HepG2 (cell line): ENCODE measurements at regions of chr3 and their contacts with region 1.

Region 1: DNA sequence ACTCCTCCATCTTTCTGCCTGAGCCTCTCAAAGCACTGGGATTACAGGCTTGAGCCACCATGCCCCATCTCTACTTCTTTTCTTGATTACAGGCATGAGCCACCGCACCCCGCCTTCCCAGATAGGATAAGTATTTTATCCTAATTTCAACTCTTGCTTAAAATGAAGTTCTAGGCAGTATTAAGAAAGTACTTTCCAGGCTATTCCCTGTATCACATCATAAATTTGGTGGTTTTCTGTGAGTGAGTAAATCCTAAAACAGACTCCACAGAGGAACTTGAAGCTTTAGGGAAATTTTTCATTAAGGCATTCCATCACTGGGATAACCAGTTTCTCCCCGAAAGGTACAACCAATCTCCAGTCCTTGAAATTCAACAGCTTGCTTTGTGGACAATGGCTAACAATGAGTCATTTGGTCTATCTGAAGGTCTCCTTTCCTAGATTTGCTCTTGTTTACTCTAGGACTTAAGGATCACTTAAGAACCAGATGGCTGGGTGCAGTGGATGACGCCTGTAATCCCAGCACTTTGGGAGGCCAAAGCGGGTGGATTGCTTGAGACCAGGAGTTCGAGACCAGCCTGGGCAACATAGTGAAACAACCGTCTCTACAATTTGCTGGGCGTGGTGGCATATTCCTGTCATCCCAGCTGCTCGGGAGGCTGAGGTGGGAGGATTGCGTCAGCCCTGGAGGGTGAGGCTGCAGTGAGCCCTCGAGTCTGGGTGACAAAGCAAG is 49.7 kb upstream of the SKIL start:
- DNase-seq: peak; percentile 24
- ATAC-seq: no peak
- H3K4me3 ChIP-seq: no peak overlapping the region
- H3K27ac ChIP-seq: no peak overlapping the region
- H3K4me1 ChIP-seq: peaks cover 21% of the 10 kb centered on the region
- H3K27me3 ChIP-seq: no peaks in the 10 kb centered on the region
- CTCF ChIP-seq: no peak
- EP300 ChIP-seq: no peak
- POLR2A ChIP-seq: no peak
- RAD21 ChIP-seq: no peak

Region 2: DNA sequence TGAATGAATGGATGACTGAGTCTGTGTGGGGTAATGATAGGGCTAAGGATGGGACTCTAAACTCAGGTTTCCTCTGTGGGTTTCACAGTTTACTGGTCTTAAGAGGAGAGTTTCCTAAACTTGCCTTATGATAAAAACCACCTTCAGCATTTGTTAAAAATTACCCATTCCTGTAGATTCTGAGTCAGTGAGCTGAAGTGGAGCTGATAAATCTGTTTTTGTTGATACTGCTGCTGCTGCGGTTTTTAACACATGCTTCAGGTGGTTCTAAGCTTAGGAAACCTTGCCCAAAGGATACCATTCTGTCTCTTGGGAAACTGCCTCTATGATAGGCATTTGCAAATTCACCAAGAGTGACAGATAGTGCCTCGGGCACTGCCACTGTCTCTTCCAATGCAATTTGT is 696.9 kb before region 1 on chr3:
- CTCF ChIA-PET with region 1: no interaction called
- POLR2A ChIA-PET with region 1: no interaction called
- in situ Hi-C with region 1: no loop called
- intact Hi-C with region 1: no loop called
- DNase-seq: no peak
- ATAC-seq: no peak
- H3K4me3 ChIP-seq: no peak overlapping the region
- H3K27ac ChIP-seq: no peak overlapping the region
- H3K4me1 ChIP-seq: no peaks in the 10 kb centered on the region
- H3K27me3 ChIP-seq: no peaks in the 10 kb centered on the region
- CTCF ChIP-seq: no peak
- EP300 ChIP-seq: no peak
- POLR2A ChIP-seq: no peak
- RAD21 ChIP-seq: no peak

Region 3: DNA sequence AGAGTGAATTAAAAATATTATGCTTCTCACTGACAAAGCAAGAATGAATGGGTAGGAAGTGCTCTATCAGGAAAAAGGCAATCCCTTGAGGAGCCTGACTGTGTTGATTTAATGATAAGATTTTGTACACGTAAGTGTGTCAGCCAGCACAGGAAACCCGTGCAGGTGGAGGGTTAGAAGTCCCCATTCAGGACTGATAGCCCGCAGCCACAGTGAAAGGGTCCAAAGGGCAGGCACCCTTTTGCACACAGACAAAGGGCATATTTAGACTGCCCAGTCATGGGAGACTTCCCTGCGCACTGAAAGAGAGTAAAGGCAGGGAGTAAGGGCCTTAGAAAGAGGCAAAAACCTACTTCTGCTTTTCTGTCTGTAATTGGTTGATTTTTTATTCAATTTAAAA is 23.3 kb after region 1 on chr3:
- CTCF ChIA-PET with region 1: no interaction called
- POLR2A ChIA-PET with region 1: interaction called, 3 read pairs
- in situ Hi-C with region 1: no loop called
- intact Hi-C with region 1: loop called (anchors 1 kb)
- DNase-seq: peak; percentile 95
- ATAC-seq: peak; percentile 98
- H3K4me3 ChIP-seq: peak overlapping the region in 1 of 3 experiments; percentile 2; a peak in 2 of 6 replicates
- H3K27ac ChIP-seq: peak overlapping the region; percentile 82
- H3K4me1 ChIP-seq: peaks cover 34% of the 10 kb centered on the region
- H3K27me3 ChIP-seq: no peaks in the 10 kb centered on the region
- CTCF ChIP-seq: no peak
- EP300 ChIP-seq: peak; percentile 70 to 85
- POLR2A ChIP-seq: no peak
- RAD21 ChIP-seq: peak; percentile 49; the same call in 1 of the 2 replicates

Region 4: GRCh38 chr3:170357176-170357919 is 49.5 kb after region 1 on chr3 and contains the start of gene SKIL:
- CTCF ChIA-PET with region 1: interaction called, 3 read pairs
- POLR2A ChIA-PET with region 1: interaction called, 4 read pairs
- in situ Hi-C with region 1: no loop called
- intact Hi-C with region 1: loop called (anchors 1 kb)
- DNase-seq: peak; percentile 82
- ATAC-seq: peak; percentile 65
- H3K4me3 ChIP-seq: peak within 1 kb of the TSS; percentile 92 to 94 (median 93)
- H3K27ac ChIP-seq: peak within 1 kb of the TSS; percentile 94
- H3K4me1 ChIP-seq: peaks cover 59% of the 10 kb centered on the region
- H3K27me3 ChIP-seq: no peaks in the 10 kb centered on the region; a peak in 2 of 5 replicates
- CTCF ChIP-seq: peak; percentile 18; the same call in 1 of the 2 replicates
- EP300 ChIP-seq: no peak
- POLR2A ChIP-seq: peak; percentile 40 to 49; a peak in 2 of 4 replicates
- RAD21 ChIP-seq: peak; percentile 44
- total RNA-seq, gene SKIL: 20.7 and 29.8 TPM in 2 replicates

Region 5: GRCh38 chr3:170368921-170369320 is 61.1 kb after region 1 on chr3:
- CTCF ChIA-PET with region 1: interaction called, 19 read pairs
- POLR2A ChIA-PET with region 1: no interaction called
- in situ Hi-C with region 1: loop called (anchors 5 kb)
- intact Hi-C with region 1: loop called (anchors 1 kb)
- DNase-seq: no peak
- ATAC-seq: no peak
- H3K4me3 ChIP-seq: no peak overlapping the region
- H3K27ac ChIP-seq: no peak overlapping the region
- H3K4me1 ChIP-seq: peaks cover 12% of the 10 kb centered on the region
- H3K27me3 ChIP-seq: no peaks in the 10 kb centered on the region
- CTCF ChIP-seq: no peak
- EP300 ChIP-seq: no peak
- POLR2A ChIP-seq: no peak
- RAD21 ChIP-seq: no peak

Region 6: DNA sequence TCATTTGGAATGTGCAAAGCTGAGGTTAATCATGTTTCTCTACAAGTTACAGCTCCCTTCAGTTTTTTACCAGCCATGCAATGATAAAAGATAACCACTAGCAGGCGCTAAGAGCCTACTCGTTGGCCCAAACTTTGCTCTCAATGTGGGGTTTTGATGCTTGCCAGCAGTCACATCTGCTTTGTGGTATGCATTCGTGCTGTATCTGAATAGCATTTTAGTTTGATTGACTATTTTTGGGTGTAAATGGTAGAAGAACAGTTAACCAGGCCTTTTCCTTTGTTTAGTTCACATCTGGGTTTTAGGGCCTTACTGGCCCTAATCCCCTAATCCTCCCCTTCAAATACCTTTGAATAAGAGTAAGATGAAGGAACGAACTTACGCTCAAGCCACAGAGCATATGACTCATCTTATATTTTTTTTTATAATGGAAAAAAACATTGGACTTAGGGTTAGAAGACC is 106.4 kb after region 1 on chr3:
- CTCF ChIA-PET with region 1: interaction called, 22 read pairs
- POLR2A ChIA-PET with region 1: no interaction called
- in situ Hi-C with region 1: loop called (anchors 5 kb)
- intact Hi-C with region 1: loop called (anchors 1 kb)
- DNase-seq: peak; percentile 52
- ATAC-seq: peak; percentile 34
- H3K4me3 ChIP-seq: no peak overlapping the region
- H3K27ac ChIP-seq: no peak overlapping the region
- H3K4me1 ChIP-seq: peaks cover 22% of the 10 kb centered on the region
- H3K27me3 ChIP-seq: no peaks in the 10 kb centered on the region; a peak in 1 of 5 replicates
- CTCF ChIP-seq: peak; percentile 91
- EP300 ChIP-seq: no peak
- POLR2A ChIP-seq: no peak
- RAD21 ChIP-seq: peak; percentile 91

Region 7: GRCh38 chr3:170811928-170812591 is 504.2 kb after region 1 on chr3:
- CTCF ChIA-PET with region 1: no interaction called
- POLR2A ChIA-PET with region 1: no interaction called
- in situ Hi-C with region 1: loop called (anchors 25 kb)
- intact Hi-C with region 1: no loop called
- DNase-seq: peak; percentile 78
- ATAC-seq: peak; percentile 85
- H3K4me3 ChIP-seq: no peak overlapping the region
- H3K27ac ChIP-seq: no peak overlapping the region
- H3K4me1 ChIP-seq: peaks cover 6% of the 10 kb centered on the region; the same call in 1 of the 2 replicates
- H3K27me3 ChIP-seq: peaks cover 0 to 26% of the 10 kb centered on the region in 2 experiments; a peak in 1 of 5 replicates
- CTCF ChIP-seq: peak; percentile 88
- EP300 ChIP-seq: no peak
- POLR2A ChIP-seq: no peak
- RAD21 ChIP-seq: peak; percentile 59; the same call in 1 of the 2 replicates